Activated naive CD8-positive, alpha-beta T cell treated with anti-CD3 and anti-CD28 coated beads, Interleukin-2, amount 10 ng/mL, durations not matched to agents 7 days and 5 days (primary cell): ENCODE measurements at regions of chr2 and their contacts with region 1.

Region 1: DNA sequence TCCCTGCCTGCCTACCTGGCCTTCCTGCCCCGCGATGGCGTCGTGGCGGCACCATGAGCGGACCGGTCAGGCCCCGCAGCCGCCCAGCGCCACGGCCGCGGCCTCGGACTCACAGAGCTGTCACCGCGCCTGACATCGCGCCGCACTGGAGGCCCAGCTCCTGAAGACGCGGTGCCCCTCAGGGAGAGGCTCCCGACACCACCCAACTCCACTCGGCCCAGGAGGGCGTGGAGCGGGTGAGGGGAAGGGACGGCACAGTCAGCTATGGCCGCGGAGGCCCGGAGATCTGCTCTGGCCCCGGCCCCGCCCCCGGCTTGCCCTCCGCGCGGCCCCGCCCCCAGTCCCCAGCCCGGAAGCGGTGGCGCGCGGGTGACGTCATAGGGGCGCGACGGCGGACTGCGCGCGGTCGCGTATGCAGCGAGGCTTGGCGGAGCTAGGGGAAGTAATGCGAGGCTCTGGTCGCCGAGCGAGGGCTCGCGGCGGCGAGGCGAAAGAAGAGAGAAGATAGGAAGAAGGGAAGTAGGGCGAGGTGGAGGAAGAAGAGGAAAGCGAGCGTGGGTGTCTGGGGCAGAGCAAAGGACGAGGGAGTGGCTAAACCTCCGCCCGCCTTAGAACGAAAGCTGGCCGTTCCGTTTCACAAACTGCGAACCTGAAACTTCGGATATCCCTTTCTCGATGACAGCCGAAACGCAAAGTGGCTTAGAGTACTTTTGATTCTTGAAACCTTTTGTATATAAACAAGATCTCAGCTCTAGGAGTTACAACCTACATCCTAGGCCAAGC is at the start of gene SLC35F5:
- DNase-seq: peak; percentile 100
- ATAC-seq: peak; percentile 89
- H3K4me3 Mint-ChIP-seq: peak within 1 kb of the TSS; percentile 99
- H3K27ac Mint-ChIP-seq: peak within 1 kb of the TSS; percentile 100
- H3K4me1 Mint-ChIP-seq: peaks cover 22% of the 10 kb centered on the region
- H3K27me3 Mint-ChIP-seq: no peaks in the 10 kb centered on the region
- total RNA-seq, gene SLC35F5: 24.1 to 25.8 TPM

Region 2: DNA sequence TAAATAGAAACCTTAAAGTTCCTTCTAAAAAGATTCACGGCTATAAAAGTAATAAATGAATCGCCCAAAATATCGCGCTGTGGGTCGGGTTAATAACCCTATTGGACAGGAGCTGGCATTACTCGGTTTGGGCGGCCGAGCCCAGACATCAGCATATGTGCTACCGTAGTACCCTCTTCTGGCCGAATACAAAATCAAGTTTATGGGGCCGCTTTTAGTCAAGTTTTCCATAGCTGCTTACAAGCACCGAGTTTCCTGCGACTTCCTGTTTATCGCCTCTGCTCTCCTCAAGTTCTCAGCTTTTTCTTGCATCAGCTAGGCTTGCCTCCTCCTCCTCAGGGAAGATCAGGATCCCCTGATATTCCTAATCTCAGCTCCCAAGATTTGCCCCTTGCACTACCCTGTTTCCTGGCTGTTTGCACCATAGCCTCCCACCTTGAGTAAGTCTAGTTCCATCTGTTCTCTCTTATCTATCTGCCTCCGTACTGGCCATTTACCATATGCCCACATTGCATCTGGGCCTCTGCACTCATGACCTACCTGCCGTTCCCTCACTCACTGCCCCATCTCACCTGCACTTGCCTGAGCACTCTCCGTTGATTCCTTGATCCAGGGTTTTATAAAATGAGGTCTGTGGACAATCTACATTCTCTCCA is 56.2 kb before region 1 on chr2:
- POLR2A ChIA-PET with region 1: interaction called, 12 read pairs
- DNase-seq: peak; percentile 44
- ATAC-seq: peak; percentile 97
- H3K4me3 Mint-ChIP-seq: peak overlapping the region; percentile 67
- H3K27ac Mint-ChIP-seq: peak overlapping the region; percentile 72
- H3K4me1 Mint-ChIP-seq: peaks cover 18% of the 10 kb centered on the region
- H3K27me3 Mint-ChIP-seq: no peaks in the 10 kb centered on the region

Region 3: DNA sequence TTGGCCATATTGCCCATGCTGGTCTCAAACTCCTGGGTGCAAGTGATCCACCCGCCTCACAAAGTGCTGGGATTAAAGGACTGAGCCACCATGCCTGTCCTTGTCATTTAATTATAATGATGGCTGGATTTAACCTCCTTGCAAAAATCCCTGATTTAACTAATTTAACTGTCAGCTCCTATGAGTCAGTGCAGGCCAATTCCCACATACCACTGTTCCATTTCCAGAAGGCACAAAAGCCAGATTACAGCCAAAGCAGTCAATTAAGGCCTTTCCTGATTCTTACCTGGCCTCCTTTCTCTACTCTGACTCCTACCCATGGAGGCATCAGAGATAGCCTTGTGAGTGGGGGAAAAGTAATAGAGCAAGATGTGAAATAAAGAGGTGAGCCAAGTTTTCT is 12.2 kb after region 1 on chr2:
- POLR2A ChIA-PET with region 1: no interaction called
- DNase-seq: no peak
- ATAC-seq: no peak
- H3K4me3 Mint-ChIP-seq: no peak overlapping the region
- H3K27ac Mint-ChIP-seq: no peak overlapping the region
- H3K4me1 Mint-ChIP-seq: no peaks in the 10 kb centered on the region
- H3K27me3 Mint-ChIP-seq: peaks cover 2% of the 10 kb centered on the region

Region 4: GRCh38 chr2:113876503-113877387 is 120.2 kb after region 1 on chr2:
- POLR2A ChIA-PET with region 1: interaction called, 26 read pairs
- DNase-seq: peak; percentile 74
- ATAC-seq: peak; percentile 95
- H3K4me3 Mint-ChIP-seq: peak overlapping the region; percentile 70
- H3K27ac Mint-ChIP-seq: peak overlapping the region; percentile 92
- H3K4me1 Mint-ChIP-seq: peaks cover 47% of the 10 kb centered on the region
- H3K27me3 Mint-ChIP-seq: no peaks in the 10 kb centered on the region

Region 5: GRCh38 chr2:113889471-113890252 is 133.1 kb after region 1 on chr2 and contains the start of gene ACTR3:
- POLR2A ChIA-PET with region 1: interaction called, 38 read pairs
- DNase-seq: peak; percentile 98
- ATAC-seq: peak; percentile 86
- H3K4me3 Mint-ChIP-seq: peak within 1 kb of the TSS; percentile 97
- H3K27ac Mint-ChIP-seq: peak within 1 kb of the TSS; percentile 95
- H3K4me1 Mint-ChIP-seq: peaks cover 61% of the 10 kb centered on the region
- H3K27me3 Mint-ChIP-seq: no peaks in the 10 kb centered on the region
- total RNA-seq, gene ACTR3: 408 to 414 TPM